Heart right ventricle (tissue), 16 donors: ENCODE measurements at regions of chr13 and their contacts with region 1.

Region 1: GRCh38 chr13:91722267-91722884 is 324.0 kb downstream of the GPC5 start:
- DNase-seq: no peak
- ATAC-seq: no peak
- H3K4me3 ChIP-seq: no peak overlapping the region
- H3K27ac ChIP-seq: no peak overlapping the region
- H3K4me1 ChIP-seq: no peaks in the 10 kb centered on the region
- H3K27me3 ChIP-seq: no peaks in the 10 kb centered on the region
- CTCF ChIP-seq: peak; percentile 22 to 71 (median 62)

Region 2: GRCh38 chr13:91133941-91134802 is 588.2 kb before region 1 on chr13:
- intact Hi-C with region 1: loop called in 1 of 10 experiments (anchors 5 kb)
- DNase-seq: peak in 1 of 2 donors; percentile 48
- ATAC-seq: peak in 7 of 8 donors; percentile 46 to 77 (median 67)
- H3K4me3 ChIP-seq: no peak overlapping the region
- H3K27ac ChIP-seq: no peak overlapping the region
- H3K4me1 ChIP-seq: peaks cover 0 to 11% (median 0%) of the 10 kb centered on the region in 9 donors
- H3K27me3 ChIP-seq: no peaks in the 10 kb centered on the region
- CTCF ChIP-seq: peak; percentile 36 to 81 (median 73)

Region 3: GRCh38 chr13:91375116-91375729 is 347.2 kb before region 1 on chr13:
- intact Hi-C with region 1: loop called in 6 of 10 experiments (anchors 2 to 5 kb)
- DNase-seq: no peak
- ATAC-seq: peak in 1 of 8 donors; percentile 51
- H3K4me3 ChIP-seq: no peak overlapping the region
- H3K27ac ChIP-seq: no peak overlapping the region
- H3K4me1 ChIP-seq: no peaks in the 10 kb centered on the region
- H3K27me3 ChIP-seq: no peaks in the 10 kb centered on the region
- CTCF ChIP-seq: peak in 7 of 9 donors; percentile 24 to 47 (median 27)

Region 4: GRCh38 chr13:91381371-91381770 is 341.0 kb before region 1 on chr13:
- intact Hi-C with region 1: loop called in 7 of 10 experiments (anchors 2 to 5 kb)
- DNase-seq: no peak
- ATAC-seq: no peak
- H3K4me3 ChIP-seq: no peak overlapping the region
- H3K27ac ChIP-seq: no peak overlapping the region
- H3K4me1 ChIP-seq: no peaks in the 10 kb centered on the region
- H3K27me3 ChIP-seq: peaks cover 0 to under 1% (median 0%) of the 10 kb centered on the region in 7 donors
- CTCF ChIP-seq: peak in 6 of 9 donors; percentile 26 to 52 (median 47)

Region 5: GRCh38 chr13:91389186-91389585 is 333.2 kb before region 1 on chr13:
- intact Hi-C with region 1: loop called in 3 of 10 experiments (anchors 5 kb)
- DNase-seq: no peak
- ATAC-seq: no peak
- H3K4me3 ChIP-seq: no peak overlapping the region
- H3K27ac ChIP-seq: no peak overlapping the region
- H3K4me1 ChIP-seq: no peaks in the 10 kb centered on the region
- H3K27me3 ChIP-seq: peaks cover 0 to 52% (median 14%) of the 10 kb centered on the region in 7 donors
- CTCF ChIP-seq: no peak

Region 6: GRCh38 chr13:91817250-91817649 is 94.9 kb after region 1 on chr13:
- intact Hi-C with region 1: no loop called
- DNase-seq: no peak
- ATAC-seq: peak in 1 of 8 donors; percentile 53
- H3K4me3 ChIP-seq: no peak overlapping the region
- H3K27ac ChIP-seq: no peak overlapping the region
- H3K4me1 ChIP-seq: no peaks in the 10 kb centered on the region
- H3K27me3 ChIP-seq: no peaks in the 10 kb centered on the region
- CTCF ChIP-seq: peak in 8 of 9 donors; percentile 16 to 60 (median 43)

Region 7: GRCh38 chr13:91909617-91910016 is 187.2 kb after region 1 on chr13:
- intact Hi-C with region 1: no loop called
- DNase-seq: no peak
- ATAC-seq: no peak
- H3K4me3 ChIP-seq: no peak overlapping the region
- H3K27ac ChIP-seq: no peak overlapping the region
- H3K4me1 ChIP-seq: no peaks in the 10 kb centered on the region
- H3K27me3 ChIP-seq: no peaks in the 10 kb centered on the region
- CTCF ChIP-seq: no peak